ENCODE measurements at regions of chr3 and their contacts with region 1.

Region 1: DNA sequence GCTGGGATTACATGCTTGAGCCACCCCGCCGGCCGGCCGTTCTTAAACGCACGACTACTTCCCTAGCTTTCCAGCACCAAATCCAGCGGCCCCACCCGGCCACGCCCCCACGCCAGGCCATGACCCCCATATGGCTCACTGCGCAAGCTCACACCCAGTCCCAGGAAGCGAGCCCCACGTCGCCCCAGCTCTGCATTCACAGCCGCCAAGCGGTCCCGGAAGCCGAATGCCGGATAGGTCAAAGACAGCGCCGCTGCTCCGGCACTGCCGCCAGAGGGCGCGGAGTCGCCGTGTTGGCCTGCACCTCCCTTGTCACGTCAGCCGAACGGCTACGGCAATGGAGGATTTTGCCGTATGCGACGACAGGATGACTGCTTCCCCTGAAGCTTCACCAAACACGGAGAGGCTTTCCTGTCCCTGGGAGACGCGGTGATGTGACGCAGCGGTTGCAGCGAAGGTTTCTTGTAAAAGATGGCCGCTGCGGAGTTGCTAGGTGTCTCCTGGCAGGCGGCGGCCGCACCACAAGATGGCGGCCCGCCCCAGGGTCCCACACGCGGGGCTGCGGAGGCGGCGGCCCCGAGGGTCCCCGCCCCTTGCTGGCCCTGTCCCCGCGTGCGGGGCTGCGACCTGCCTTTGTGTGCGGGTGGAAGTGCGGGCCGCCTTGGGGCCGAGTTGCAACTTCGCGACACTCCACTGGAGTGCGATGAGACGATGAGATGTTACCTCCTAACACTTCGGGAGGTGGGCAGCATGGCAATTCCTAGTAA is 30.2 kb upstream of the RPN1 start:
- DNase-seq: peak; percentile 98
- ATAC-seq: peak; percentile 98
- H3K4me3 Mint-ChIP-seq: peak overlapping the region; percentile 96
- H3K27ac Mint-ChIP-seq: peak overlapping the region; percentile 99
- H3K4me1 Mint-ChIP-seq: peaks cover 31% of the 10 kb centered on the region
- H3K27me3 Mint-ChIP-seq: no peaks in the 10 kb centered on the region

Region 2: GRCh38 chr3:128123538-128124368 is 557.0 kb before region 1 on chr3 and contains the start of gene RUVBL1:
- CTCF ChIA-PET with region 1: no interaction called
- POLR2A ChIA-PET with region 1: no interaction called
- intact Hi-C with region 1: loop called in 1 of 2 experiments (anchors 1 kb)
- DNase-seq: peak; percentile 99
- ATAC-seq: peak; percentile 99
- H3K4me3 Mint-ChIP-seq: peak within 1 kb of the TSS; percentile 99
- H3K27ac Mint-ChIP-seq: peak within 1 kb of the TSS; percentile 96
- H3K4me1 Mint-ChIP-seq: peaks cover 30% of the 10 kb centered on the region
- H3K27me3 Mint-ChIP-seq: no peaks in the 10 kb centered on the region
- total RNA-seq, gene RUVBL1: 97.0 to 99.9 TPM

Region 3: DNA sequence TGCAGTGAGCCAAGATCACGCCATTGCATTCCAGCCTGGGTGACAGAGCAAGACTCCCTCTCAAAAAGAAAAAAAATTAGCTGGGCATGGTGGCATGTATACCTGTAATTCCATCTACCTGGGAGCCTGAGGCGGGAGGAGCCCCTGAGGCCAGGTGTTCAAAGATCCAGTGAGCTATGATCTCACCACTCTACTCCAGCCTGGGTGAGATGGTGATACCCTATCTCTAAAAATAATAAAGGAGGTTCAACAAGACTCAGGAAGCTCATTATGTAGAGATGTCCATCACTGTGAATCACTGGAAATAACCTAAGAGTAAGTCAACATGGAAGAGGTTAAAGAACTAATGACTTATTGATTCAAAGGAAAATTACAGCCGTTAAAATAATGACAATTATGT is 25.4 kb after region 1 on chr3:
- CTCF ChIA-PET with region 1: interaction called, 15 read pairs
- POLR2A ChIA-PET with region 1: no interaction called
- intact Hi-C with region 1: no loop called
- DNase-seq: no peak
- ATAC-seq: no peak
- H3K4me3 Mint-ChIP-seq: no peak overlapping the region
- H3K27ac Mint-ChIP-seq: no peak overlapping the region
- H3K4me1 Mint-ChIP-seq: no peaks in the 10 kb centered on the region
- H3K27me3 Mint-ChIP-seq: no peaks in the 10 kb centered on the region

Region 4: DNA sequence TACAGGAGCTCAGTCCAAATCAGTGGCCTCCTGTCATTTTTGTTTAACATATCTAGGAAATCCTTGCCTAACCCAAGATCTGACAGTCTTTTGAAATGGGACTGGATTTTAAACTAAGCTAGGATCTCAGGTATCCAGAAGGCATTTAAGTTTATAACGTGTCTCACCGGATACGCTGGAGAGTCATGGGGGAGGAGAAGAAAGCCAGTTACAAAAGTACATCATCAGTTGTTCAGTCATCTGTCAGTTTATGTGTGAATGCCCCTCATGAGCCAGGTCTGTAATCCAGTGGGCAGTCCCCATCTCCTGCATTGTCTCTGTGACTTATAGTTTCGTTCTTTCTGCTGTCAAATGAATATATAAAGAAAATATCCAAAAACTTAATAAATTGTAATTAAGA is 89.6 kb after region 1 on chr3:
- CTCF ChIA-PET with region 1: no interaction called
- POLR2A ChIA-PET with region 1: no interaction called
- intact Hi-C with region 1: no loop called
- DNase-seq: no peak
- ATAC-seq: no peak
- H3K4me3 Mint-ChIP-seq: no peak overlapping the region
- H3K27ac Mint-ChIP-seq: peak overlapping the region; percentile 10
- H3K4me1 Mint-ChIP-seq: peaks cover 59% of the 10 kb centered on the region
- H3K27me3 Mint-ChIP-seq: no peaks in the 10 kb centered on the region

Region 5: DNA sequence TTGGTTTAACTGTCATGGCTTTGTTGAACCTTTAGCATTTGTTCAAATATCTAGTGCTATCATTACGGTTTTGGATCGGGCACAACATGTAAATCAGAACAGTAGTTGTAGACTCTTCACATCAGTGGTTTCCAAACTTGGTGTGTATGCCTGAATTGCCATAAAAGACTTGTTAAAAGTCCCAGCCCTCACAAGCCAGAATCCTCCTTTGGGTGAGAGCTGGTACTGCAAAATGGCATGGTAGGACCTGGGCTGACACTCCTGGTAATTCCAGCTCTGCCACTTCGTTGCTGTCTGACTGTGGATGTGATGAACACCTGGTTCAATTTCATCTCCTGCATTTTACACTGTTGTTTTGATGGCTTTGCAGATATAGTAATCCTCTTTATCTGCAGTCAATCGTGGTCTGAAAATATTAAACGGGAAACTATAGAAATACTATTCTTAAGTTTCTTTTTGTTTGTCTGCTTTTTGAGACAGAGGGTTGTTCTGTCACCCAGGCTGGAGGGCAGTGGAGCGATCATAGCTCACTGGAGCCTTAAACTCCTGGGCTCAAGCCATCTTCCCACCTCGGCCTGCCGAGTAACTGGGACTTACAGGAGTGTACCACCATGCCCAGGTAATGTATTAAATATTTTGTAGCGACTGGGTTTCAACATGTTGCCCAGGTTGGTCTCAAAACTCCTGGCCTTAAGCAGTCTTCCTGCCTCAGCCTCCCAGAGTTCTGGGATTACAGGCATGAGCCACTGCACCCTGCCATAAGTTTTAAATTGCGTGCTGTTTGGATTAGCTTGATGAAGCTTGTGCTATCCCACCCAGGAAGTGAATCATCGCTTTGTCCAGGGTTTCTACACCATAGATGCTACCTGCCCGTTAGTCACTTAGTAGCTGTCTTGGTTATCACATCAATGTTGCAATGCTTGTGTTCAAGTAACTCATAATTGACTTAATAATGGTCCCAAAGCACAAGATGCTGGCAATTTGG is 106.8 kb after region 1 on chr3:
- CTCF ChIA-PET with region 1: interaction called, 29 read pairs
- POLR2A ChIA-PET with region 1: interaction called, 6 read pairs
- intact Hi-C with region 1: loop called (anchors 1 kb)
- DNase-seq: peak; percentile 62
- ATAC-seq: peak; percentile 73
- H3K4me3 Mint-ChIP-seq: peak overlapping the region; percentile 73
- H3K27ac Mint-ChIP-seq: peak overlapping the region; percentile 100
- H3K4me1 Mint-ChIP-seq: peaks cover 97% of the 10 kb centered on the region
- H3K27me3 Mint-ChIP-seq: no peaks in the 10 kb centered on the region

Region 6: DNA sequence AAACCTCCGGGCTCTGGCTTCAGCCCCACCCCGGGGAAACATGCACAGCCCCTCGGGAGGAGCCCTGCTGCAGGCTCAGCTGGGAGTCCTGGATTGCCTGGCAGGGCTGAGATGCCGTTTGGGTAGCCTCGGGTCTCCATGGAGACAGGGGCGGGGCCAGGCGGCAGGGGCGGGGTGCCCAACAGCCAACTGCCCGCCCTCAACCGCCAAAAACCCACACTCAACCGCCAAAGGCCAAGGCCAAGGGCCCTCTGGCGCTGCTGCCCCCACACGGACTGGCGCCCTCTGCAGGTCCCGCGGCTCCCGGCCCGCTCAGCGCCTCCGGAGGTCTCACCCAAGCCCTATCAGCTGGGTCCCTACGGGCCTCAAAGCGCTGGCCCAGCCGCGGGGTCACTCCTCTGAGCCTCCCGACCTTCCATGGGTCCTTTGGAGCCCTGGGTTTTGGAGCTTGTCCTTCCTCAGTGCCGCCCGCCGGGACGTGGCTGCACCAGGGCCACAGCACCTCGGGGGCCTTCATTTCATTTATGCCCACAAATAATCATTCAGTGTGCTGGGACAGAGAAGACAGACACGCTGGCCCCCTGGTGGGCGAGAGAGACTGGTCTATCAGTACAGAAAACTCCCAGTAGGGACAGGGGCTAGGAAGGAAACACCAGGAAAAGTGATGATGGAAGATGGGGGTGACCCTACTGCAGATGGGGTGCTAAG is 165.1 kb after region 1 on chr3:
- CTCF ChIA-PET with region 1: interaction called, 21 read pairs
- POLR2A ChIA-PET with region 1: no interaction called
- intact Hi-C with region 1: loop called (anchors 1 kb)
- DNase-seq: peak; percentile 93
- ATAC-seq: peak; percentile 84
- H3K4me3 Mint-ChIP-seq: peak overlapping the region; percentile 62
- H3K27ac Mint-ChIP-seq: peak overlapping the region; percentile 95
- H3K4me1 Mint-ChIP-seq: peaks cover 20% of the 10 kb centered on the region
- H3K27me3 Mint-ChIP-seq: no peaks in the 10 kb centered on the region

Region 7: GRCh38 chr3:129026728-129027543 is 346.2 kb after region 1 on chr3:
- CTCF ChIA-PET with region 1: no interaction called
- POLR2A ChIA-PET with region 1: no interaction called
- intact Hi-C with region 1: loop called in 1 of 2 experiments (anchors 1 kb)
- DNase-seq: peak; percentile 96
- ATAC-seq: peak; percentile 100
- H3K4me3 Mint-ChIP-seq: peak overlapping the region; percentile 72
- H3K27ac Mint-ChIP-seq: peak overlapping the region; percentile 81
- H3K4me1 Mint-ChIP-seq: peaks cover 12% of the 10 kb centered on the region
- H3K27me3 Mint-ChIP-seq: no peaks in the 10 kb centered on the region